B cell (primary cell): ENCODE measurements at regions of chr1 and their contacts with region 1.

Region 1: DNA sequence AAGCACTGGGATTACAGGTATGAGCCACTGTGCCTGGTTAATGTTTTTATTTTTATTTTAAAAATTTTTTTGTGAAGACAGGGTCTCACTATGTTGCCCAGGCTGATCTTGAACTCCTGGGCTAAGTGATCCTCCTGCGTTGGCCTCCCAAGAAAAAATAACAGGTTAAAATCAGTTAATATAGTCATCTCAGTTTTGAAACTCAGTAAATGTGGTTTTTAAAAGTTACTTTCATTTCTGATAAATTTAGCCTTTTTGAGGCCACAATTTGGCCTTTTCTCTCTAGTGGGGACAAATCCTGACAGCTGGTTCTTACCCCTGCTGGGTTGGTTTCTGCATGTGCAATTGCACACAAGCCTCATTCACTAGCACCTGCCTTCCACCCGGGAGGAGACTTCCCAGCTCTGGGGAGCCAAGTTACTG is 13.3 kb downstream of the PMF1 start:
- DNase-seq: no peak
- ATAC-seq: no peak
- H3K4me3 ChIP-seq: no peak overlapping the region
- H3K4me3 Mint-ChIP-seq: no peak overlapping the region
- H3K27ac ChIP-seq: no peak overlapping the region
- H3K27ac Mint-ChIP-seq: no peak overlapping the region
- H3K4me1 ChIP-seq: no peaks in the 10 kb centered on the region
- H3K4me1 Mint-ChIP-seq: peaks cover 4% of the 10 kb centered on the region
- H3K27me3 ChIP-seq: no peaks in the 10 kb centered on the region
- H3K27me3 Mint-ChIP-seq: no peaks in the 10 kb centered on the region
- CTCF ChIP-seq: no peak

Region 2: GRCh38 chr1:155847823-155848529 is 378.2 kb before region 1 on chr1:
- CTCF ChIA-PET with region 1: no interaction called
- POLR2A ChIA-PET with region 1: no interaction called
- intact Hi-C with region 1: no loop called
- DNase-seq: no peak
- ATAC-seq: no peak
- H3K4me3 ChIP-seq: no peak overlapping the region
- H3K4me3 Mint-ChIP-seq: no peak overlapping the region
- H3K27ac ChIP-seq: peak overlapping the region in 1 of 2 donors; percentile 4
- H3K27ac Mint-ChIP-seq: no peak overlapping the region
- H3K4me1 ChIP-seq: no peaks in the 10 kb centered on the region
- H3K4me1 Mint-ChIP-seq: peaks cover 45% of the 10 kb centered on the region
- H3K27me3 ChIP-seq: no peaks in the 10 kb centered on the region
- H3K27me3 Mint-ChIP-seq: no peaks in the 10 kb centered on the region
- CTCF ChIP-seq: no peak

Region 3: GRCh38 chr1:156096640-156097391 is 129.3 kb before region 1 on chr1:
- CTCF ChIA-PET with region 1: interaction called, 51 read pairs
- POLR2A ChIA-PET with region 1: interaction called, 8 read pairs
- intact Hi-C with region 1: no loop called
- DNase-seq: peak; percentile 97
- ATAC-seq: peak; percentile 87
- H3K4me3 ChIP-seq: peak overlapping the region in 3 of 5 experiments; percentile 3 to 47 (median 30)
- H3K4me3 Mint-ChIP-seq: peak overlapping the region; percentile 72
- H3K27ac ChIP-seq: peak overlapping the region; percentile 82 to 93
- H3K27ac Mint-ChIP-seq: peak overlapping the region; percentile 95
- H3K4me1 ChIP-seq: peaks cover 23 to 24% of the 10 kb centered on the region in 2 donors
- H3K4me1 Mint-ChIP-seq: peaks cover 31% of the 10 kb centered on the region
- H3K27me3 ChIP-seq: peaks cover 0 to 1% (median 0%) of the 10 kb centered on the region in 4 experiments
- H3K27me3 Mint-ChIP-seq: no peaks in the 10 kb centered on the region
- CTCF ChIP-seq: peak; percentile 95

Region 4: DNA sequence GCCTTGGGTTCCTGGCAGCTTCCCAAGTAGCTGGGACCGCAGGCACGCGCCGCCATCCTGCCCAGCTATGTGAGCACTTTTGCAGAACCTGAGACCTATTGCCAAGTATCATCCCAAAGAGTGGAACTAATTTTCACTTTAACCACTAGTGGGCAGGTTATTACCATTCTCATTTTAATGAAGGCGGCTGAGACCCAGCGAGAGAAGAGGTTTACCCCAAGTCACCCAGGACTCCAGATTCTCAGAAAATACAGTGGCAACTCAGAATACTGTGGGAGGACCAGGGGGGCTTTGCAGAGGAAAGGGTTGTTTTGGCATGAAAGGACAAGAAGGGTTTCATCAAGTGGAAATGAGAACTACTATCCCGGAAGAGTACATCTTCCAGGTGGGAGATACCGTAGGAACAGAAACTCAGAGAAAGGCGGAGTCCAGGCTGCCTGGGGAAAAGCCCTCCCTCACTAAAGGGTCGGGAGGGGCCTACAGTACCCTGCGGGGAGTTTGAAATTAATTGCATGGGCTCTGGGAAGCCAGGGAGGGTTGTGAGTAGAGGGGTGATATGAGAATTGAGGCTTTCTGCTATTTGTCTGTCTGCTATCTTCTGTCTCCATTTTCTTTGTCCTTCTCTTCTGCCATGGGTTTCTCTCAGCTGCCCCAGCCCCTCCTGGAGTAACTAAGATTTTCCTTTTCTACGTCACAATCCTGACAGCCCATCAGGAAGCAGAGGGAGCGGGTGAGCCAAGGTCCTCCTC is 79.9 kb before region 1 on chr1:
- CTCF ChIA-PET with region 1: interaction called, 381 read pairs
- POLR2A ChIA-PET with region 1: interaction called, 9 read pairs
- intact Hi-C with region 1: loop called (anchors 1 kb)
- DNase-seq: peak; percentile 83
- ATAC-seq: peak; percentile 66
- H3K4me3 ChIP-seq: peak overlapping the region in 1 of 5 experiments; percentile 15
- H3K4me3 Mint-ChIP-seq: peak overlapping the region; percentile 62
- H3K27ac ChIP-seq: no peak overlapping the region
- H3K27ac Mint-ChIP-seq: peak overlapping the region; percentile 42
- H3K4me1 ChIP-seq: peaks cover 50 to 54% of the 10 kb centered on the region in 2 donors
- H3K4me1 Mint-ChIP-seq: peaks cover 48% of the 10 kb centered on the region
- H3K27me3 ChIP-seq: peaks cover 0 to 10% (median 5%) of the 10 kb centered on the region in 4 experiments
- H3K27me3 Mint-ChIP-seq: peaks cover 8% of the 10 kb centered on the region
- CTCF ChIP-seq: peak; percentile 75

Region 5: GRCh38 chr1:156172696-156173470 is 53.2 kb before region 1 on chr1:
- CTCF ChIA-PET with region 1: interaction called, 11 read pairs
- POLR2A ChIA-PET with region 1: no interaction called
- intact Hi-C with region 1: no loop called
- DNase-seq: no peak
- ATAC-seq: no peak
- H3K4me3 ChIP-seq: no peak overlapping the region
- H3K4me3 Mint-ChIP-seq: no peak overlapping the region
- H3K27ac ChIP-seq: no peak overlapping the region
- H3K27ac Mint-ChIP-seq: no peak overlapping the region
- H3K4me1 ChIP-seq: no peaks in the 10 kb centered on the region
- H3K4me1 Mint-ChIP-seq: no peaks in the 10 kb centered on the region
- H3K27me3 ChIP-seq: no peaks in the 10 kb centered on the region
- H3K27me3 Mint-ChIP-seq: no peaks in the 10 kb centered on the region
- CTCF ChIP-seq: no peak

Region 6: GRCh38 chr1:156212833-156213643 is 13.1 kb before region 1 on chr1 and contains the start of gene PMF1:
- CTCF ChIA-PET with region 1: interaction called, 43 read pairs
- POLR2A ChIA-PET with region 1: interaction called, 5 read pairs
- intact Hi-C with region 1: no loop called
- DNase-seq: peak; percentile 97
- ATAC-seq: peak; percentile 97
- H3K4me3 ChIP-seq: peak within 1 kb of the TSS; percentile 75 to 95 (median 81)
- H3K4me3 Mint-ChIP-seq: peak within 1 kb of the TSS; percentile 98
- H3K27ac ChIP-seq: peak within 1 kb of the TSS; percentile 93 to 94
- H3K27ac Mint-ChIP-seq: peak within 1 kb of the TSS; percentile 99
- H3K4me1 ChIP-seq: peaks cover 14 to 19% of the 10 kb centered on the region in 2 donors
- H3K4me1 Mint-ChIP-seq: peaks cover 29% of the 10 kb centered on the region
- H3K27me3 ChIP-seq: no peaks in the 10 kb centered on the region
- H3K27me3 Mint-ChIP-seq: no peaks in the 10 kb centered on the region
- CTCF ChIP-seq: no peak
- total RNA-seq, gene PMF1: 58.3 and 64.3 TPM in 2 replicates

Region 7: GRCh38 chr1:156705918-156706656 is 480.0 kb after region 1 on chr1:
- CTCF ChIA-PET with region 1: no interaction called
- POLR2A ChIA-PET with region 1: no interaction called
- intact Hi-C with region 1: no loop called
- DNase-seq: peak; percentile 79
- ATAC-seq: peak; percentile 68
- H3K4me3 ChIP-seq: peak overlapping the region in 4 of 5 experiments; percentile 54 to 70 (median 58)
- H3K4me3 Mint-ChIP-seq: peak overlapping the region; percentile 89
- H3K27ac ChIP-seq: no peak overlapping the region
- H3K27ac Mint-ChIP-seq: no peak overlapping the region
- H3K4me1 ChIP-seq: peaks cover 28% of the 10 kb centered on the region in 2 donors
- H3K4me1 Mint-ChIP-seq: peaks cover 32% of the 10 kb centered on the region
- H3K27me3 ChIP-seq: peaks cover 3 to 51% (median 31%) of the 10 kb centered on the region in 4 experiments
- H3K27me3 Mint-ChIP-seq: peaks cover 20% of the 10 kb centered on the region
- CTCF ChIP-seq: peak; percentile 82